Dorsolateral prefrontal cortex (tissue), 120 donors: ENCODE measurements at regions of chr11 and their contacts with region 1.

Region 1: DNA sequence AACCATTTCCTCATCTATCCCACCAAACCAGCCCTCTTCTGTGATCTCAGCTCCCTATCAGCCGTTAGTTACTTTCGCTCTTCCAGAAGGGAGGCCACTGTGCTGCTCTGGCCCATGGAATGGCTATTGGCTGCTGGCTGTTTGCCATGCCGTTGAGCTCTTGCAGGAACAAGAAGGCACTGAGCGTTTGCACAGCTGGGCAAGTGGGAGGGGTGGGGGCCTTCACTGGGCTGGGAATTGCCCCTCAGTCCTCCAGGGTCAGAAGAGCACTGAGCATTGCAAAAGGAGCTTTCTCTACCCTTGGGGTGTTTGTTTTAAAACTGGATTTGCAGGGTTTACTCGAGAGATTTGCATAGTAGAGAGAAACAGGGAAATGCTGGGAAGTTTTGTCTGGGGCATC is 129.0 kb upstream of the PARVA start:
- DNase-seq: peak in 9 of 10 donors; percentile 69 to 86 (median 75)
- H3K4me3 ChIP-seq: peak overlapping the region in 12 of 59 donors; percentile 1 to 45 (median 16)
- H3K27ac ChIP-seq: peak overlapping the region in 24 of 59 donors; percentile 4 to 87 (median 38)
- H3K27me3 ChIP-seq: no peaks in the 10 kb centered on the region
- CTCF ChIP-seq: no peak

Region 2: DNA sequence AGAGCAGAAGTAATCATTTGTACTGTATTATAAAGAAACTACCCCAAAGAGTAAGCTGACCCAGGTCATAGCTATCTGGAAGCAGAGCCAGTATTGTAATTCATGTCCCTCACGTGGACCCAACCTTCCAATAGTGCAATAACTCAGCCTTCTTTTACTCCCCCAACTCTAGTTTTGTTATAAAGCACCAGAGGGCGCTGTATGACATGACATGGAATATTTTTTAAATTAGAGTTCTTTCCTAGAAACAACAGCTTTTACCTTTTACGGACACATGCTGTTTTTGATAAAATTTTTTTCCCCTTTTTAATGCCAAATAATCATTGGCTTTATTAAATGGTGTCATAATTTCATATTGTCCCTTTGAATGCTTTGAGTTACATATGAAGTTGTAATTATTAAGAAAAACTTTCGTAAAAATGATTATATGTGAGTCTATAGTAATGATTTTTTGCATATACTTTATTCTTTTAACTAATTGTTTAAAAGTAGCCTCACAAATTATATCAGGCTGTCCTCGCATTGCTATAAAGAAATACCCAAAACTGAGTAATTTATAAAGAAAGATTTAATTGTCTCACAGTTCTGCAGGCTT is 316.8 kb before region 1 on chr11:
- intact Hi-C with region 1: loop called in 1 of 2 experiments (anchors 10 kb)
- DNase-seq: no peak
- H3K4me3 ChIP-seq: no peak overlapping the region
- H3K27ac ChIP-seq: peak overlapping the region in 2 of 59 donors; percentile 2 to 27
- H3K27me3 ChIP-seq: no peaks in the 10 kb centered on the region
- CTCF ChIP-seq: peak; percentile 43 to 92 (median 72)

Region 3: GRCh38 chr11:11998091-11998781 is 250.1 kb before region 1 on chr11:
- intact Hi-C with region 1: no loop called
- DNase-seq: no peak
- H3K4me3 ChIP-seq: no peak overlapping the region
- H3K27ac ChIP-seq: peak overlapping the region in 45 of 59 donors; percentile 14 to 93 (median 54)
- H3K27me3 ChIP-seq: no peaks in the 10 kb centered on the region
- CTCF ChIP-seq: no peak

Region 4: DNA sequence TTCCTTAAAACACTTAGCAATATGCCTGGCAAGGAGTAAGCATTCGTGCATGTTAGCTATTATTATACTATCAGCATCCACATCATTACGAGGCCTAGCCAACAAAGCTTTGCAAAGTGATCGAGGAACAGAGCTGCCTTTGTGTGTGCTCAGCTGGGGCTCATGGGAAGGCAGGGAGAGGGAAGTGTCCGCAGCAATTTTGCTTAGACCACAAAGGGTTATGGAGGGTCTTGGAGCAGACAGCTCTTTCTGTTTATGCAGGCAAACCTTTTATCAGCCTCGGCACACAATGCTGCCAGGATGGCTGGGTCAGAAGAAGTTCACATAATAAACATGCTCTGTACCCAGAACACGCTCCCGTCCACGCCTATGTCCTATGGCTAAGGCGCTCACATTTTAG is 229.0 kb before region 1 on chr11:
- intact Hi-C with region 1: no loop called
- DNase-seq: peak in 3 of 10 donors; percentile 47 to 61 (median 54)
- H3K4me3 ChIP-seq: peak overlapping the region in 33 of 59 donors; percentile 1 to 51 (median 24)
- H3K27ac ChIP-seq: peak overlapping the region in 55 of 59 donors; percentile 2 to 85 (median 61)
- H3K27me3 ChIP-seq: no peaks in the 10 kb centered on the region
- CTCF ChIP-seq: peak in 2 of 56 donors; percentile 12 to 33

Region 5: GRCh38 chr11:12052676-12053605 is 195.4 kb before region 1 on chr11:
- intact Hi-C with region 1: loop called in 1 of 2 experiments (anchors 5 kb)
- DNase-seq: peak in 5 of 10 donors; percentile 42 to 77 (median 48)
- H3K4me3 ChIP-seq: no peak overlapping the region
- H3K27ac ChIP-seq: peak overlapping the region in 6 of 59 donors; percentile 5 to 45 (median 16)
- H3K27me3 ChIP-seq: no peaks in the 10 kb centered on the region
- CTCF ChIP-seq: no peak